Heart left ventricle (tissue), 16 donors: ENCODE measurements at regions of chr7 and their contacts with region 1.

Region 1: DNA sequence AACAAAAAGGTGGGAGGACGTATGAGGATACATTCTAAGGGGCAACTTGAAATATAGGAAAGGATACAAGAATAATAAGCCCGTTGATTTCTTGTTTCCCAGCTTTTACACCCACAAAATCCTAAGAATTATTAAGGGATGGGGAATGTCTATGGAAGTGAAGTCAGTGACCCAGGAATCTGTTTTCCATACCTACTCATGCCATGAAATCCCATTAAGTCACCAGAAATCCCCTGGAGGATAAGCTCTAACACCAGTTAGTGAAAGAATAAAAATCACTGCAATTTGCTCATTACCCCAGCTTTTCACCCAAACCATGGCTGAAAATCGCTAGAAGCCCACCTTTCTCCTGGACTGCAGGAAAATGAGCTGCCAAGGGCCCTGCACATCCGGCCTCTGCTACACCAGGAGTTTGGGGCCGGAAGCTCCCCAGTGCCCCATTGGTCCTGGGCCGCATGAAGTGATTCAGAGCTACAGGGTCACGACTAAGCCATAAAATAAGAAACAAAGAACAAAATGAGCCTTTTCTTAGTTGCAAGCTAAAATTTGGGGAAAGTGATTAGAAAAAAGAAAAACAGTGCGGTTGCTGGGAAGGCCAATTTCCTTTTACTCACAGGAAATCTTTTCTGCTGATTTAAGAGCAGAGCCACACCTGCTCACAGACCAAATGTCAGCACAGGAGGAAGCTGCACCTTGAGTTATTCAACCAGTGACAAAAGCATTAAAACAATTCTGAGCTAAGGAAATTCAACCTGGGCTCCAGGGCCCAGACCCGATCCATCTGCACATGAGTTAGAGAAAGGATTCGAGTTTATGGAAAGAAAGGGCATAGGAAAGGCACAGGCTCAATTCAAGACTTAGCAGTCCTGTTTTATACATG is 40.3 kb downstream of the HIPK2 start:
- DNase-seq: no peak
- ATAC-seq: no peak
- H3K4me3 ChIP-seq: no peak overlapping the region
- H3K27ac ChIP-seq: peak overlapping the region; percentile 63 to 97 (median 91)
- H3K4me1 ChIP-seq: peaks cover 26 to 100% (median 95%) of the 10 kb centered on the region in 12 donors
- H3K27me3 ChIP-seq: no peaks in the 10 kb centered on the region
- CTCF ChIP-seq: no peak
- POLR2A ChIP-seq: no peak

Region 2: DNA sequence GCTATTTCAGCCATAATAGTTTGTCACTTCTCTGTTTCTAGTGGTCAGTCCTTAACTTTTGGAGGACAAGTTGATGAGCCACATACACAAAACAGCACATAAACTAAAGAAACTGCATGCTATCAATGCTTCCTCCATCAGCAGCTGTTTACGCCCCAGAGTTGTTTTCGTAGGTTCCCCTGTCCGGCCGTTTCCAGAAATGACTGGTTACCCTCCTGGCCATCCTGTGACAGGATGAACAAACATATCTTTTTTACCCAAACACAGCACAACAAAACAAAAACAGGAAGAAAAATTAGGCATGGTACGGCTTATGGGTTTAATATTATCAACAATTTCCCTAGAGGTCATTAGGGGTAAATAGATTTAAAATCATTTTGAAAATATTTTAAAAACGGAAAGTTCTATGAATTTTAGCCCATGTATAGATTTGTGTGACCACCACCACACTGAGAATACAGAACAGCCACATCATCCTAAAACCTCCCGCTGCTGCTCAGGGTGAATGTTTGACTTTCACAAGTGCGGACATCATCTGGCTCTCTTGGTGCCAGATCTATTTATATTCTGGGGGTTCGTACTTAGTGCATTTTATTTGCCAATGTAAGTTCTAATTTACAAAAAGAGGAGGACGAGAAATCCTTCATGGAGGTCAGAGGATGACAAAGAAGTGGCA is 34.5 kb before region 1 on chr7:
- intact Hi-C with region 1: loop called in 1 of 10 experiments (anchors 5 kb)
- DNase-seq: no peak
- ATAC-seq: peak; percentile 48 to 71 (median 60)
- H3K4me3 ChIP-seq: no peak overlapping the region
- H3K27ac ChIP-seq: peak overlapping the region; percentile 66 to 93 (median 80)
- H3K4me1 ChIP-seq: peaks cover 14 to 87% (median 55%) of the 10 kb centered on the region in 12 donors
- H3K27me3 ChIP-seq: no peaks in the 10 kb centered on the region
- CTCF ChIP-seq: no peak
- POLR2A ChIP-seq: no peak

Region 3: GRCh38 chr7:139771001-139771970 is 33.8 kb after region 1 on chr7:
- intact Hi-C with region 1: loop called in 6 of 10 experiments (anchors 2 to 5 kb)
- DNase-seq: no peak
- ATAC-seq: no peak
- H3K4me3 ChIP-seq: no peak overlapping the region
- H3K27ac ChIP-seq: peak overlapping the region in 1 of 12 donors; percentile 4
- H3K4me1 ChIP-seq: peaks cover 0 to 95% (median 68%) of the 10 kb centered on the region in 12 donors
- H3K27me3 ChIP-seq: no peaks in the 10 kb centered on the region
- CTCF ChIP-seq: no peak
- POLR2A ChIP-seq: no peak

Region 4: DNA sequence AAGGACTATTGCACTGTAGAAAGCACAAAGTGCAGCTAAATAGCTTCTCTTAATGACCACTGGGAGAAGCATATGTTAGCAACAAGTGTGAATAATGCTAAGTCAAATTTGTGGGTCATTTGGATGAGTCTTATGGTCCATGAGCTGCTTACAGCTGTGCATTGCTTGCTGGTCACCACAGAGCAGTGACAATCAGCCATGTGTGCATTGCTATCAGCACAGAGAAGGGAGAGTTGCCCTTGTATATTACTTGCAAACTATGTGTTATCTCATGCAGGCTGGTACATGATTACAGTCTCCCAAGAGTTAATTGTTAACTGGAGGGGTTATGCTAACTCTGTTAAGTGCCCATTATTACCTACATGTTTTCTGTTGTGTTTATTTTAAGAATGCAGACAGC is 1251.6 kb after region 1 on chr7:
- intact Hi-C with region 1: no loop called
- DNase-seq: no peak
- ATAC-seq: no peak
- H3K4me3 ChIP-seq: no peak overlapping the region
- H3K27ac ChIP-seq: no peak overlapping the region
- H3K4me1 ChIP-seq: no peaks in the 10 kb centered on the region
- H3K27me3 ChIP-seq: no peaks in the 10 kb centered on the region
- CTCF ChIP-seq: no peak
- POLR2A ChIP-seq: no peak